ENCODE measurements at regions of chr2 and their contacts with region 1.

Region 1: GRCh38 chr2:163191372-163191771 is 352.8 kb upstream of the KCNH7 start:
- H3K4me3 ChIP-seq: no peak overlapping the region
- H3K27ac ChIP-seq: no peak overlapping the region
- H3K4me1 ChIP-seq: no peaks in the 10 kb centered on the region
- CTCF ChIP-seq: 0 out of 2 replicates have a peak, but pooled peaks have one; percentile 22

Region 2: DNA sequence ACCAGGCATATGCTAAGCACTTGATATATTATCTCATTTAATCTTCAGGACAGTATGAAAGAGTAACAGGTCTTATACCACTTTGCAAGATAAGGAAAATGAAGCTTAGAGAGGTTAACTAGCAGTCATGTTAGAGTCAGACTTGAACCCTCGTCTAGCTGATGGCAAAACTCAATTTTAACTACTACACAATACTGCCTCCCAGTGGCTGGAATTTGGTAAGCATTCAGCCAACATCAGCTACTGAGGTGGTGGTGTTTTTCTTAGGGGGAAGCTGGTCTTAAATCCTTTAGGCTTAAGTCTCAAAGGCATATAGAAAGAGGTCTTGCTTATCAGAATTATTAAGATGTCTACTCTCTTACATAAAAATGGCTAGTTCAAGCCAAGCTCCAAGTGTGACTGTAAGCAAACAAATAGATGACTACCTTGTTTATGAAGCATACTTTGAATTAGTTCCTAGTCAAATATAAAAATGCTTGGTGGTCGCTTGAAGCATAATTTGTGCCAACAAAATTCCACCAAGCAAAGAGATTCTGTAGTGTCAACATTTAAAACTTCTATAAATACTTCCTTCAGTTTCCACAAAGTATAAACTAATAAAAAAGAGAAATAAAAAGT is 869.9 kb after region 1 on chr2:
- CTCF ChIA-PET with region 1: interaction called, 16 read pairs
- POLR2A ChIA-PET with region 1: no interaction called
- H3K4me3 ChIP-seq: no peak overlapping the region
- H3K27ac ChIP-seq: no peak overlapping the region
- H3K4me1 ChIP-seq: peaks cover 6% of the 10 kb centered on the region
- CTCF ChIP-seq: peak; percentile 54

Measured in HEK293 (cell line).